ENCODE measurements at regions of chr7 and their contacts with region 1.

Region 1: GRCh38 chr7:55132890-55133551 is 114.2 kb downstream of the EGFR start:
- DNase-seq: peak; percentile 80 to 85
- ATAC-seq: peak; percentile 28
- H3K4me3 ChIP-seq: no peak overlapping the region
- H3K27ac ChIP-seq: peak overlapping the region in 1 of 2 donors; percentile 97
- H3K4me1 ChIP-seq: peaks cover 3 to 8% of the 10 kb centered on the region in 2 donors
- H3K27me3 ChIP-seq: no peaks in the 10 kb centered on the region

Region 2: DNA sequence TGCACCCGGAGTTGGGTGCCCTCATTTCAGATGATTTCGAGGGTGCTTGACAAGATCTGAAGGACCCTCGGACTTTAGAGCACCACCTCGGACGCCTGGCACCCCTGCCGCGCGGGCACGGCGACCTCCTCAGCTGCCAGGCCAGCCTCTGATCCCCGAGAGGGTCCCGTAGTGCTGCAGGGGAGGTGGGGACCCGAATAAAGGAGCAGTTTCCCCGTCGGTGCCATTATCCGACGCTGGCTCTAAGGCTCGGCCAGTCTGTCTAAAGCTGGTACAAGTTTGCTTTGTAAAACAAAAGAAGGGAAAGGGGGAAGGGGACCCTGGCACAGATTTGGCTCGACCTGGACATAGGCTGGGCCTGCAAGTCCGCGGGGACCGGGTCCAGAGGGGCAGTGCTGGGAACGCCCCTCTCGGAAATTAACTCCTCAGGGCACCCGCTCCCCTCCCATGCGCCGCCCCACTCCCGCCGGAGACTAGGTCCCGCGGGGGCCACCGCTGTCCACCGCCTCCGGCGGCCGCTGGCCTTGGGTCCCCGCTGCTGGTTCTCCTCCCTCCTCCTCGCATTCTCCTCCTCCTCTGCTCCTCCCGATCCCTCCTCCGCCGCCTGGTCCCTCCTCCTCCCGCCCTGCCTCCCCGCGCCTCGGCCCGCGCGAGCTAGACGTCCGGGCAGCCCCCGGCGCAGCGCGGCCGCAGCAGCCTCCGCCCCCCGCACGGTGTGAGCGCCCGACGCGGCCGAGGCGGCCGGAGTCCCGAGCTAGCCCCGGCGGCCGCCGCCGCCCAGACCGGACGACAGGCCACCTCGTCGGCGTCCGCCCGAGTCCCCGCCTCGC is 114.4 kb before region 1 on chr7 and contains the start of gene EGFR:
- intact Hi-C with region 1: loop called (anchors 2 to 5 kb)
- DNase-seq: peak; percentile 88 to 94
- ATAC-seq: peak; percentile 91
- H3K4me3 ChIP-seq: peak within 1 kb of the TSS; percentile 84 to 88
- H3K27ac ChIP-seq: peak within 1 kb of the TSS; percentile 15 to 91
- H3K4me1 ChIP-seq: no peaks in the 10 kb centered on the region
- H3K27me3 ChIP-seq: no peaks in the 10 kb centered on the region
- total RNA-seq, gene EGFR: 70.5 to 72.4 TPM

Region 3: DNA sequence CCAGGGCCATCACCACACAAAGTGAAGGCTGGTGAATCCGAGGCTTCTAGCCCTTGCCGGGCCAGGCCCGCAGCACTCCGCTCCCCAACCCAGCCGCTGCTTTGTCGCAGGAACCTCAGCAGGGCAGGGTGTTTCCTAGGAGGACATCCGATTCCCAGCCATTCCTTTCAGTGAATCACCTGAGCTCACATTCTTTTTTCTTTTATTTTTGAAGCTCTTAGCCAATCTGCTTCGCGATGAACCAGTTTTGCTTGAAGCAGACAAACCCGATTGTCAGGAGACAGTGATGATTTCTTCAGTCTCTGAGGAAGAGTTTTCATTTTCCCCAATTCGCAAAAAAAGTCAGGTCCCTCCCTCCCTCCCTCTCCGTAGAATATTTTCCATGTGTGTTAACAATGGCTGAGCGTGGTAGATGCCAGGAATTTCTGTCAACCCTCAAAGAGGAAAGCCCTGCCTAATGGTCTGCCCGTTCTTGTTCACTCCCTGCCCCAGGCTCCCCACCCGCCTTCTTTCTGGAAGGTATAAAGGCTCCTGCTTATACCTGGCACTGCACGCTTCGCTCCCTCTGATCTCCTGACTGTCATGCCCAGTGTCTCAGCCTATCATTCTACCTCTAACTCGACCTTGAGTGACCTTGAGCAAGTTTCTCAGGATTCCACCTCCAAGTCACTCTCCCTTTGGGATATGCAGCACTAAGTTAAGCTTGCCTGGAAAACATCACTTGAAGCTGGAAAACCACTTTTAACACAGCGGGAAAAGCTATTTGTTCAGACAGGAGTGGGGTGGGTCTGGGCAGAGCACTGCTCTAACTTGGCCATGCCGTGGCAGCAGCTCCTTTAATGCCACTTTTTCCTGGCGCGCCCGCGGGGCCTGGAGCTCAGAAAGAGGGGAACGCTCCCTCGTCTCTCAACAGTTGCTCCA is 79.1 kb before region 1 on chr7:
- intact Hi-C with region 1: loop called in 1 of 2 experiments (anchors 2 kb)
- DNase-seq: peak; percentile 58 to 73
- ATAC-seq: peak; percentile 27
- H3K4me3 ChIP-seq: no peak overlapping the region
- H3K27ac ChIP-seq: peak overlapping the region; percentile 29 to 73
- H3K4me1 ChIP-seq: peaks cover 0 to 8% of the 10 kb centered on the region in 2 donors
- H3K27me3 ChIP-seq: no peaks in the 10 kb centered on the region

Region 4: DNA sequence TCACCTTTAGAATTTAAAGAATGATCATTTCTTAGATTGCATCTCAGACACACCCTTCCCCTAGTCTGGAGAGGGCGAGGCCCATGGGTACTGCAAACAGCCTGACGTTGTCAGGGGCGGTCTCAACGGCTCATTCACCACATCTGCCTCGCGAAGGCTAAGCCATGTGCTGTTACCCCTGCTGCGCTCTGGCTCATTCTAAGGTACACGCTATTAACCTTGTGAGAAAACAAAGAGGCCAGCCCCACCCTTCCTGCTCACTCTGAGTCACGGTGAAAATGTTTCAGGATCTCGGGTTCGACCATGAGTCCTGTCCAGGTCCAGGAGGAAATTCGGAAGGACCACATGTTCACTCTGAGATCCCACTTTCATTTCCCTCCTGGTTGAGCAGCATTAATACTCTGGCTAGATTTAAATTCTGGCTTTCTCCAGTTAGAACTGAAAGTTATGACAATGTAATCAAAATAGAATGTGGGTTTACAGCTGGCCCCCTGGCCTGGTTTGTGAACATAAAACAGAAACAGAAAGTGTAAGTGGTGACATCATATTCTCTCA is 59.0 kb before region 1 on chr7:
- intact Hi-C with region 1: loop called (anchors 5 kb)
- DNase-seq: no peak
- ATAC-seq: peak; percentile 42
- H3K4me3 ChIP-seq: no peak overlapping the region
- H3K27ac ChIP-seq: peak overlapping the region; percentile 47 to 81
- H3K4me1 ChIP-seq: peaks cover 5 to 7% of the 10 kb centered on the region in 2 donors
- H3K27me3 ChIP-seq: no peaks in the 10 kb centered on the region

Region 5: DNA sequence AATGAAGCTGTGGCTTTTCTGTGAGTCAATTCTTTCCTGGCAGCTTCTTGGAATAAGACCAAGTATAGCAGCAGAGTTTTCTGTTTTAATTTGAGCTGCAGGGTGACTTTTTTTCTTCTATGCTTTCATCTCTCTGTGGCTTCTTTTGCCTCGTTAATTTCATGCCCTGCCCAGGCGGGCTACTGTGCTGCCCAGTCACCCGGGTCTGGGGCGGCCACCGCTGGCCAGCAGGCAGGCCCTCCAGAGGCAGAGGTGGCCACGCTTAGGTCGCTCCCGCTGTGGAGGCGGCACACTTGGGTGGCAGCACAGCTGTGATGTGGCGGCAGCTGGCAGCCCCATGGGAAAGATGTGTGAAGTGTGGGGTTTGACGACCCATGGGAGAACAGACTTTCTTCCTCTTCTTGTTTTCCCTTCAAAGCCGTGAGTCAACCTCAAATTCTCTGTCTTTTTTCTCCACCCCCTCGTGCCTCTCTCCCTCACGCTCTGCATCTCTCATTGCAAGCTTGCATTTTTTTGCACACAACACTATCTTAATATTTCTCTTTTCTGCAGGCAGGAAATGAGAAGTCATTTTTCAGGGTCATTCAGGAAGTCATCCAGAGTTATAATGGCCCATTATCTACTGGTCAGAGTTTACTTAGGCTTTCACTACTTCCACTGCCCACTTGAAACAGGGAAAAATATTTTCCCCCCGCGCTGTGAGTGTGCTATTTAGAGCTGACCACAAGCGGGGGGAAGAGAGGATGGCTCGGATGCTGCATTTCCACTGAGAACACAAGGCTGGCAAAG is 46.4 kb before region 1 on chr7:
- intact Hi-C with region 1: loop called (anchors 5 kb)
- DNase-seq: peak in 1 of 2 donors; percentile 74
- ATAC-seq: peak; percentile 71
- H3K4me3 ChIP-seq: no peak overlapping the region
- H3K27ac ChIP-seq: peak overlapping the region; percentile 37 to 76
- H3K4me1 ChIP-seq: peaks cover 3 to 6% of the 10 kb centered on the region in 2 donors
- H3K27me3 ChIP-seq: no peaks in the 10 kb centered on the region

Measured in aorta (tissue), 5 donors.